Breast epithelium (tissue), 4 donors: ENCODE measurements at regions of chr10 and their contacts with region 1.

Region 1: GRCh38 chr10:83142074-83142563 is 997.2 kb upstream of the GHITM start:
- DNase-seq: no peak
- H3K4me3 ChIP-seq: no peak overlapping the region
- H3K27ac ChIP-seq: no peak overlapping the region
- H3K4me1 ChIP-seq: no peaks in the 10 kb centered on the region
- H3K27me3 ChIP-seq: no peaks in the 10 kb centered on the region
- CTCF ChIP-seq: no peak
- POLR2A ChIP-seq: no peak

Region 2: DNA sequence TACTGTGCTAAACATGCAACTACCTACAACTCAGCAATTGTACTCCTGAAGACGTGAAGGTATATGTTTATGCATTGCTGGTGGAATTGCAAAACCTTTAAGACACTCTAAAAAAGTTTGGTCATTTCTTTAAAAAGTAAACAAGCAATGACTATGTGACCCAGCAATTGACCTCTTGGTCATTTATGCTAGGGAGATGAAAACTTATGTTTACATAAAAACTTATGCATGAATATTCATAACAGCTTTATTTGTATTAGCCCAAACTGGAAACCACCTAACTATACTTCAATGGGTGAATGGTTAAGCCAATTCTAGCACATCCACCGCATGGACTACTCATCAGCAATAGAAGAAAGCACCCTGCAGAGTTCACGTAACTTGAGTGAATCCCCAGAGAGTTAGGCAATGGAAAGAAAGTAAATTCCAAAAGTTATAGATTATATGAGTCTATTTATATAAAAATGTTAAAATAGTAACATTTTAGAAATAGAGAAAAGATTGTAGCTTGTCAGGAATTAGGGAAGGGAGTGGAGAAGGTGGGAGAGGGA is 1327.4 kb before region 1 on chr10:
- intact Hi-C with region 1: no loop called
- DNase-seq: no peak
- H3K4me3 ChIP-seq: no peak overlapping the region
- H3K27ac ChIP-seq: no peak overlapping the region
- H3K4me1 ChIP-seq: no peaks in the 10 kb centered on the region
- H3K27me3 ChIP-seq: no peaks in the 10 kb centered on the region
- CTCF ChIP-seq: no peak
- POLR2A ChIP-seq: no peak

Region 3: DNA sequence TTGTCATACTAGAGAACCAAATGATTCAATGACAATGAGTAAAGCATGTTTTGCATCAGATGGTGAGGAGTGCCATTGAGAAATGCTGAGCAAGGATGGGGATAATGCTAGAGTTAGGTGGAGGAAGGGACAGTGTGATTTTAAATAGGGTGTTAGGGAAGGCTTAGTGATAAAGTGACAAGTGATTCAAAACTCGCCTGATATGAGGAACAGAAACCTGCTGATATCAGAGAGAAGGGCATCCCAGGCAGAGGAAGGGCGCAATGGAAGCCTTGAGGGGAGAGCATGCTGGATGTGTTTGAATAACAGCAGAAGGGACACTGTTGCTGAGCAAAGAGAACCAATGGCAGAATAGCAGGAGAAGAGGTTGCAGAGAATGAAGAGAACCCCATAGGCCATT is 1070.9 kb before region 1 on chr10:
- intact Hi-C with region 1: loop called (anchors 5 kb)
- DNase-seq: no peak
- H3K4me3 ChIP-seq: no peak overlapping the region
- H3K27ac ChIP-seq: no peak overlapping the region
- H3K4me1 ChIP-seq: no peaks in the 10 kb centered on the region
- H3K27me3 ChIP-seq: no peaks in the 10 kb centered on the region
- CTCF ChIP-seq: no peak
- POLR2A ChIP-seq: no peak

Region 4: DNA sequence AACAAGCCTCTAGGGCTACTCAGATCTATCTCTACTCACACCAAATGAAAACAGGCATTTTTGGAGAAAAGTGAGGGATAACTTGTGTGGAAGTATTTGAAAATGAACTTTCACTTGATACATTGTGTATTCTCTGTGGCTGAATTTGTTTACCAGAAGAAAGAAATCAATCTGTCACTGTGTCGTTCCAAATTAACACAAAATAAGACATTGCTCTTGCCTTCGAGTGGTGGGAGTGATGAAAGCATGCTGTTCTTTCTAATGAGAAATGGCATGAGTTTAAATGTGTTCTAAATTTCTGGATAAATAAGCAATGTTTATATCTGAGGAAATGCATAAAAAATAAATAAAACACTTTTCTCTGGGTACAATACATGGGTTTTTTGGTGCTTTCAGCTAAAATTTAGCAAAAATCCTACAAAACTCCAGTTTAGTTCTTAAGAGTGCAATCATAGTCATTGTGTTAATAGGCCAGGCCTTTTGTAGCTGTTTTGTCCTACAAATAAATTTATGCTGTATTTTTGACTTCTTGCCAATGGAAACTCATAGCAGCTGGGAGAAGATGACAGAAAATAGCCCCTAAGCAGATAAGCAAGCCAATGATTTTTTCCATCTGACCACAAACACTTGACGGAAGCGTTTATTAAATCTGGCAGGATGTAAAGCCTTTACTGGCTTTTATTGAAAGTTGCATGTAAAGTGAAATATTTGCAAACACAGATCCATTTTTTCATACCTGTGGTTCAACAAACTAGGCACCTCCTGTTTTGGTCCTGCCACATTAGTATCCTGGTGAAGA is 66.9 kb before region 1 on chr10:
- intact Hi-C with region 1: no loop called
- DNase-seq: no peak
- H3K4me3 ChIP-seq: no peak overlapping the region
- H3K27ac ChIP-seq: no peak overlapping the region
- H3K4me1 ChIP-seq: no peaks in the 10 kb centered on the region
- H3K27me3 ChIP-seq: no peaks in the 10 kb centered on the region
- CTCF ChIP-seq: no peak
- POLR2A ChIP-seq: no peak